MCF 10A (cell line): ENCODE measurements at regions of chr4 and their contacts with region 1.

Region 1: DNA sequence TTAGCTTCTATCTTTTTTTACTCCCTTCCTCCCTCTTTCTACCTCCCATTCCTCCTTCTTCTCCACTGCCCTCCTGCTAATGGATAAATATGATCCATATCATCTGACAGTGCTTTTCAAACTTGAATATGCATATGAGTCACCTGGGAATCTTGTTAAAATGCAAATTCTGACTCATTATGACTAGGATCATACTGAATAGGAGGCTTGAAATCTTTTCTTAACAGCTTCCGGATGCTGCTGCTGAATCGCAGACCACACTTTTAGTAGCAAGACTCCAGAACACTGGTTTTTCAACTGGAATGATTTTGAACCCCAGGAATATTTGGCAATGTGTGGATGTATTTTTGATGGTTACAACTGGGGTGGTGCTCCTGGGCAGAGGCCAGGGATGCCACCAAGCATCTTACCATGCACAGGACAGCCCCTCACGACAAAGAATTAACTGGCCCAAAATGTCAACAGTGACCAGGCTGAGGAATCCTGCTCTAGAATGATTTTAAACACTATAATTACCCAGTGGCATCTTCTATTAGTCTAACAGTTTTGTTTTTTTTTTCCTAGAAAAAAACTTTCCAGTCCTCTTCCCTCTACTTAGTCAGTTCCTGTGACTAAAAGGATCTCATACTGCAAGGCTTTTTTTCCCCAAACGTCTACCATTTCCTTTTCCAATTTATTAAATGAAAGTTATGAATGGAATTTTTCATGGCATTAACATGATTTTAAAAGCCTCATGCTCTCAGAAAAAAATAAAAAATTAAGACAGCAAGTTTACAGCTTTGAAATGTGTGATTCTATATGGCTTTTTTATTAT is 10.6 kb upstream of the PYURF start:
- DNase-seq: peak; percentile 61
- H3K4me3 Mint-ChIP-seq: no peak overlapping the region
- H3K27ac Mint-ChIP-seq: no peak overlapping the region
- H3K4me1 Mint-ChIP-seq: peaks cover 7% of the 10 kb centered on the region
- H3K27me3 Mint-ChIP-seq: no peaks in the 10 kb centered on the region
- CTCF ChIP-seq: no peak

Region 2: GRCh38 chr4:88523325-88524129 is 10.6 kb before region 1 on chr4 and contains the start of gene PYURF:
- CTCF ChIA-PET with region 1: interaction called, 28 read pairs
- POLR2A ChIA-PET with region 1: interaction called, 15 read pairs
- intact Hi-C with region 1: no loop called
- DNase-seq: peak; percentile 93
- H3K4me3 Mint-ChIP-seq: peak within 1 kb of the TSS; percentile 97
- H3K27ac Mint-ChIP-seq: peak within 1 kb of the TSS; percentile 89
- H3K4me1 Mint-ChIP-seq: peaks cover 14% of the 10 kb centered on the region
- H3K27me3 Mint-ChIP-seq: no peaks in the 10 kb centered on the region
- CTCF ChIP-seq: no peak
- total RNA-seq, gene PYURF: 80.9 and 82.5 TPM in 2 replicates

Region 3: DNA sequence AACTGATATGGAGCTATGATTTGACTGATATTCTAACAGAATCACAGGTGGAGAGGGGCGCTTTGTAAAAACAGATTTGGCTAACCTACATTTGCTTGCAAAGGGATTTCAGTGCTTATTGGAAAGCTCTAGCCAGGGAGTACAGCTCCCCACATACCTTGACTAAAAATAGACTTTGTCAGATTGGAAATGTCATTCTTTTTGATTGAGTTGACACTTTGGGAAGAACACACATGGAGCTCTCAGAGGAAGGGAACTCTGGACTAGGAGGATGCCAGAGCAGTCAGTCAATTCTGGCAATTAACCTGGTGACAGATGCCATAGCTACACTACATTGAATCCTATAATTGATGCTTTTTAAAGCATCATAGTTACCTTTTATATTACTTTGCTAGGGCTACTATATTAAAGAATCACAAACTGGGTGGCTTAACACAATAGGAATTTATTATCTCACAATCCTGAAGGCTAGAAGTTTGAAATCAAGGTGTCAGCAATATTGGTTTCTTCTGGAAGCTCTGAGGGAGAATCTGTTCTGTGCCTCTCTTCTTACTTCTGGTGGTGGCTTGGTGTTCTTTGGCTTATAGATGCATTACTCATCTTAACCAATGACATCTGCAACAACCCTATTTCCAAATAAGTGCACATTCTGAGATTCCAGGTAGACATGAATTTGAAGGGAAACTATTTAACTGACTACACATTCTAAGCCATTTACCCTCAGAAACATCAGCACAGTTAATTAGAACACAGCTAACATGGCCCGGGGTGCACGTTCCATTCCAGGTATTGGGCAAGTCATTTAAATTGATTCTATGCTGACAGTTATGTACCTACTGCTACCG is 49.7 kb after region 1 on chr4:
- CTCF ChIA-PET with region 1: interaction called, 12 read pairs
- POLR2A ChIA-PET with region 1: interaction called, 3 read pairs
- intact Hi-C with region 1: no loop called
- DNase-seq: peak; percentile 14
- H3K4me3 Mint-ChIP-seq: no peak overlapping the region
- H3K27ac Mint-ChIP-seq: no peak overlapping the region
- H3K4me1 Mint-ChIP-seq: peaks cover 17% of the 10 kb centered on the region
- H3K27me3 Mint-ChIP-seq: no peaks in the 10 kb centered on the region
- CTCF ChIP-seq: no peak

Region 4: DNA sequence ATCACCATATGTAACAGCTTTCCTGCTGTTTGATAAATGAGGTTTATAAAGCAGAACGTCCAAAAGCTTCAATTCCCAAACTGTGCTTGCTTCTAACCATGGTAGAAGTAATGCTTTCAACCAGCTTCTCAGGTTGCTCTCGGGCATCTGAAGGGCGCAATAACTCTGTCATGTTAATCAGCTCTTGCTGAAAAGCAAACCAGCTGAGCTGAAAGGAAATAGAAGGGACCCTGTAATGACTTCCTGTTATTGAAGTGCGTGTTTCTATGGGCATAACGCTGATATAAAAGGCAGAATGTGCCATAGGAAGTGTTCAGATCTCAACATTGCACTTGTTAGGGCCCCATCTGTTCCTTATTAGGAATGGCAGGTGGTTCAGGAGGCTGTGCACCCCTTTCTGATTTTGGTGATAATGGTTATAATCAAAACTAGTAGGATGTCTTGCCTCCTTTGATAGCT is 79.3 kb after region 1 on chr4:
- CTCF ChIA-PET with region 1: interaction called, 12 read pairs
- POLR2A ChIA-PET with region 1: interaction called, 3 read pairs
- intact Hi-C with region 1: no loop called
- DNase-seq: no peak
- H3K4me3 Mint-ChIP-seq: no peak overlapping the region
- H3K27ac Mint-ChIP-seq: peak overlapping the region; percentile 59
- H3K4me1 Mint-ChIP-seq: peaks cover 56% of the 10 kb centered on the region
- H3K27me3 Mint-ChIP-seq: no peaks in the 10 kb centered on the region
- CTCF ChIP-seq: no peak

Region 5: DNA sequence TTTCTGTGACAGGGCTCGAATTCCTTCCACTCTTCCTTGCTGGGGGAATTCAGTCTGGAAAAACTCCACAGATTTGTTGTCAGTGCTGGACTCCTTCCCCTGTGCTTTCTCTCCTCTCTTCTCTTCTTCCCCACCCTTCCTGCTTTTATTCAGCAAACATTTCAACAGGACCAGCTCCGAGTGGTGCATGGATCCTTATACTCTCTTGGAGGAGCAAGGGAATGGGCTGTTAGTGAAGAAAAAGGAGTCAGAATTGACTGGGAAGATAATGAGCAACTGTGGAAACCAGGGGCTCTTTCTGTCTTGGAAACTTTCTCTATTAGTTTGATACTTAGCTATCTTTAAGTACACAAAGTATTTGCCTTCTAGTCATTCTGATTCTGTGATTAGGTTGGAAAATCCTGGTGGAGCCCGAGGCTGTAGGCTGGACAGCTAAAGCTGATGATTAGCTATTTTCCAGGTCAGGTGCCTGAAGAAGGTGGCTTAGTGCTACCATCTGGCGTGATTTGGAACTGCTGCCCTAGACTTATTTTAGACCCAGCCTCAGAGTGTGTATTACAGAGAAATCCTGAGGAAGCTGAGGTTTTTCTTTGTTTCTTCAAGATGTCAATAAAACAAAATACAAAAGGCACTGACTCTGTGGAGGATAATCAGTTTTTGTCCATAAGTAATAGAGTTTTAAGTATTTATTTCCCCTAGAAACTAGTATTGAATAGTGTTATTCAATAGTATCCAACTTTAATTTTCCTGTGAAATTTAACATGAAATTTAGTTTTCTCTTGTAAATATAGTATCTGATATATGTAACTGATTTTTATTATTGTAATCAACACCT is 125.1 kb after region 1 on chr4:
- CTCF ChIA-PET with region 1: interaction called, 149 read pairs
- POLR2A ChIA-PET with region 1: interaction called, 9 read pairs
- intact Hi-C with region 1: loop called (anchors 1 kb)
- DNase-seq: peak; percentile 79
- H3K4me3 Mint-ChIP-seq: no peak overlapping the region
- H3K27ac Mint-ChIP-seq: peak overlapping the region; percentile 50
- H3K4me1 Mint-ChIP-seq: peaks cover 15% of the 10 kb centered on the region
- H3K27me3 Mint-ChIP-seq: no peaks in the 10 kb centered on the region
- CTCF ChIP-seq: peak; percentile 76